ENCODE measurements at regions of chr9 and their contacts with region 1.

Region 1: GRCh38 chr9:128361986-128362646 is 9.1 kb upstream of the URM1 start:
- DNase-seq: peak; percentile 95
- H3K27ac ChIP-seq: peak overlapping the region; percentile 84
- CTCF ChIP-seq: peak; percentile 99

Region 2: DNA sequence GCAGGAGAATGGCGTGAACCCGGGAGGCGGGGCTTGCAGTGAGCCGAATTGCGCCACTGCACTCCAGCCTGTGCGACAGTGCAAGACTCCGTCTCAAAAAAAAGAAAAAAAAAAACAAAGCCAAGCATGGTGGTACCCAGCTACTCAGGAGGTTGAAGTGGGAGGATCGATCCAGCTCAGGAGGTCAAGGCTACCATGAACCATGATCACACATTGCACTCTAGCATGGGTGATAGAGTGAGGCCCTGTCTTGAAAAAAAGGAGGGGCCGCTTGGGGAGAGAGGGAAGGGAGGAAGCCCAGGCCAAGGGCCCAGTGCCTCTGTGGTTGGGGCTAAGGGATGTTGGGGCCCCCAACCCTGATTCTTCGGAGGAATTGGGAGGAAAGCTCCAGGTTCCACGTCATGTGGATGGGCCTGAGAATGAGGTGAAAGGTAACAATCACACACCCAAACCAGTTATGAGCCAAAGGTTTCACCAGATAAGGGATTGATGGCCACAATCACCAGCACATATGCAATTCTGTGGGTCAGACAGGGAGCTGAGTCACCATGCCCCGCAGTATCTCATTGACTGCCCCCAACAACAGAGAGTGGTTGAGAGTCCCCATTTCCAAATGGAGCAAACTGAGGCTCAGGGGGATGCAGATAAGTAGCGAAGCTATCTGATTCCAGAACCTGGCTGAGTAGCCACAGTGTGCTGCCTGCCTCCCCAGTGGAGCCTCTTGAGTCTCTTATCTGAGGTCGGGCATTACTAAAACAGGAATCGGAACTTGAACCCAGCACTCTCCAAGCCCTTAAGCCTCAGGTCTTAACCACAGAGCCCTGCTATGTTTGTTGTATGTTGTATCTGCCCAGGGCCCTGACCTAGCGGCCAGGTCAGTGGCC is 65.5 kb before region 1 on chr9:
- CTCF ChIA-PET with region 1: interaction called, 15 read pairs
- POLR2A ChIA-PET with region 1: no interaction called
- DNase-seq: no peak
- H3K27ac ChIP-seq: peak overlapping the region; percentile 71
- CTCF ChIP-seq: no peak

Region 3: DNA sequence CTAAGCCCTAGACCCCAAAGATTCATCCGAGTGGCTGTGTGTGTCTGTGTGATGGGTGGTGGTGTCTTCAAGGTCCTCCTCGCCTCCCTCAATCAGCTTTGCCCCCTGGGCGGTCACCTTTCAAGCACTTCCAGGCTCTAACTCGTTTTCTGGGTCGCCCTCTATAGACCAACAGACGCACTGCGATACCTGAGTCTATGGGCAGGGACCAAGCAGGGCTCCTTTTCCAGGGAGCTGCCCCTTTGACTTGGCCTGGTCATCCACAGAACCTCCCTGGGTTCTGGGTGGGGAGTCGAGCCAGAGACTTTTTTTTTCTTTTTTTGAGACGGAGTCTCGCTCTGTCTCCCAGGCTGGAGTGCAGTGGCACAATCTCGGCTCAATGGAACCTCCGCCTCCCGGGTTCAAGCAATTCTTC is 20.7 kb before region 1 on chr9:
- CTCF ChIA-PET with region 1: interaction called, 17 read pairs
- POLR2A ChIA-PET with region 1: interaction called, 3 read pairs
- DNase-seq: peak; percentile 94
- H3K27ac ChIP-seq: peak overlapping the region; percentile 86
- CTCF ChIP-seq: peak; percentile 98

Region 4: GRCh38 chr9:128412120-128412790 is 50.1 kb after region 1 on chr9:
- CTCF ChIA-PET with region 1: interaction called, 33 read pairs
- POLR2A ChIA-PET with region 1: no interaction called
- DNase-seq: no peak
- H3K27ac ChIP-seq: no peak overlapping the region
- CTCF ChIP-seq: peak; percentile 41

Region 5: GRCh38 chr9:128420060-128420650 is 58.0 kb after region 1 on chr9:
- CTCF ChIA-PET with region 1: interaction called, 26 read pairs
- POLR2A ChIA-PET with region 1: no interaction called
- DNase-seq: peak; percentile 87
- H3K27ac ChIP-seq: peak overlapping the region; percentile 80
- CTCF ChIP-seq: peak; percentile 99

Region 6: GRCh38 chr9:128438343-128439109 is 76.4 kb after region 1 on chr9:
- CTCF ChIA-PET with region 1: interaction called, 11 read pairs
- POLR2A ChIA-PET with region 1: no interaction called
- DNase-seq: peak; percentile 90
- H3K27ac ChIP-seq: peak overlapping the region; percentile 37
- CTCF ChIP-seq: peak; percentile 100

Region 7: DNA sequence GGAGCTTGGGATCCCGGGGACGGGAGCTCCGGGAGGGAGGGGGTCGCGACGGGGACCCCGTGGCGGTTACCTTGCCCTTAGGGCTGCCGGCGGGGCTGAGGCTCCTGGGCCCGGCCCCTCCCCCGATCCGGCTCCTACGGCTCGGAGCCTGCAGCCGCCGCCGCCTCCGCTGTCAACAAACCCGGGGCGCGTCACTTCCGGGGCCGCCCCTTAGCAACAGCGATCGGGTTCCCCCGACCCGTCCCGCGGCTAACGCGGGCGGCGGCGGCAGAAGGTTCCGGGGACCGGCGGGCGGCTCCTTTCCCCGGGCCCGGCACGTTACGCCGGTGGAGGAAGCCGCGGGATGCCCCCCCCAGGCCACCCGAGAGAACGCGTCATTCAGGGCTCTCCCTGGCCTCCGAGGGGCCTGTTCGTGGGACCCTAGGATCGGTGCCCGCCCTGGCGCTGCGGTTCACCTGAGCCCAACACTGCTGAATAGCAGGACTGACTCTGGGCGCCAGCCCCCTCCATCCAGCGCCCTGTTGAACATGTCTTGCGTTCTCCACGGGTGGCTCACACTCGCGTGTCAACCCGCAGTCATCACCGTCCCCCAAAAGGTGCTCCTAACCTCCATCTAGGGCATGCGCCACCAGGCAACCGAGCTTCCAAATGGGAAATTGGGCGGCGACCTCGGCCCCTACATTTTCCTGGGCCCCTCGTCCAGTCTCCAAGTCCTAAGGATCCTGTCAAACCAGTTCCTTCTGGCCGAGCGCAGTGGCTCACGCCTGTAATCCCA is 409.8 kb after region 1 on chr9 and contains the start of gene ZER1:
- CTCF ChIA-PET with region 1: no interaction called
- POLR2A ChIA-PET with region 1: no interaction called
- DNase-seq: peak; percentile 100
- H3K27ac ChIP-seq: peak within 1 kb of the TSS; percentile 91
- CTCF ChIP-seq: no peak